HepG2 (cell line): ENCODE measurements at regions of chrX and their contacts with region 1.

Region 1: GRCh38 chrX:153763989-153764755 is at the start of gene PLXNB3:
- DNase-seq: peak; percentile 57
- ATAC-seq: peak; percentile 77
- H3K4me3 ChIP-seq: peak within 1 kb of the TSS; percentile 45 to 66 (median 53); a peak in 5 of 6 replicates
- H3K27ac ChIP-seq: no peak within 1 kb of the TSS
- H3K4me1 ChIP-seq: peaks cover 37% of the 10 kb centered on the region
- H3K27me3 ChIP-seq: no peaks in the 10 kb centered on the region
- CTCF ChIP-seq: peak; percentile 96
- EP300 ChIP-seq: no peak
- POLR2A ChIP-seq: no peak
- RAD21 ChIP-seq: peak; percentile 73; the same call in 1 of the 2 replicates
- total RNA-seq, gene PLXNB3: 1.2 and 3.0 TPM in 2 replicates

Region 2: DNA sequence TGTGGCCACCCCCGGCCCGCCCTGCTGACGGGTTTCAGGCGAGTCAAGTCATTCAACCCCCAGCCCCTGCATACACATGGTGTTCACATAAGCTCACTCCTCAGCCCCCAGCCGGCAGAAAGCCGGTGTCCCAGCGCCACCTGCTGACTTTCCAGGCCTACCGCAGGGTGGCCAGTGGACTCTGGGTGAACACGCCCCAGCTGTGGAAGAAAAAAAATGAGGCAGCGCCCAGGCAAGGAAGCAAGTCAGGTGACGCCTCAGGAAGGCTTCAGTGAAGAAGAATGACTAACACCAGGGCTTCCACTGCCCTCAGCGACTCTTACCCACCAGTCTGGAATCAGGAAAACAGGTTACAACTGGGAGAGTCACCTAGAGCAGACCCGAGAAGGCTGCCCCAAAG is 55.8 kb before region 1 on chrX:
- CTCF ChIA-PET with region 1: no interaction called
- POLR2A ChIA-PET with region 1: no interaction called
- in situ Hi-C with region 1: no loop called
- intact Hi-C with region 1: no loop called
- DNase-seq: peak; percentile 65
- ATAC-seq: peak; percentile 86
- H3K4me3 ChIP-seq: no peak overlapping the region
- H3K27ac ChIP-seq: no peak overlapping the region
- H3K4me1 ChIP-seq: no peaks in the 10 kb centered on the region
- H3K27me3 ChIP-seq: no peaks in the 10 kb centered on the region
- CTCF ChIP-seq: peak; percentile 84
- EP300 ChIP-seq: no peak
- POLR2A ChIP-seq: no peak
- RAD21 ChIP-seq: peak; percentile 31; the same call in 1 of the 2 replicates

Region 3: GRCh38 chrX:153726286-153727122 is 37.7 kb before region 1 on chrX:
- CTCF ChIA-PET with region 1: no interaction called
- POLR2A ChIA-PET with region 1: interaction called, 15 read pairs
- in situ Hi-C with region 1: no loop called
- intact Hi-C with region 1: no loop called
- DNase-seq: peak; percentile 75
- ATAC-seq: peak; percentile 62
- H3K4me3 ChIP-seq: peak overlapping the region; percentile 60 to 79 (median 79); a peak in 5 of 6 replicates
- H3K27ac ChIP-seq: peak overlapping the region; percentile 92
- H3K4me1 ChIP-seq: peaks cover 51% of the 10 kb centered on the region
- H3K27me3 ChIP-seq: no peaks in the 10 kb centered on the region
- CTCF ChIP-seq: peak; percentile 9; the same call in 1 of the 2 replicates
- EP300 ChIP-seq: no peak
- POLR2A ChIP-seq: peak in 1 of 2 experiments; percentile 86; a peak in 2 of 4 replicates
- RAD21 ChIP-seq: 0 out of 2 replicates have a peak, but pooled peaks have one; percentile 44

Region 4: DNA sequence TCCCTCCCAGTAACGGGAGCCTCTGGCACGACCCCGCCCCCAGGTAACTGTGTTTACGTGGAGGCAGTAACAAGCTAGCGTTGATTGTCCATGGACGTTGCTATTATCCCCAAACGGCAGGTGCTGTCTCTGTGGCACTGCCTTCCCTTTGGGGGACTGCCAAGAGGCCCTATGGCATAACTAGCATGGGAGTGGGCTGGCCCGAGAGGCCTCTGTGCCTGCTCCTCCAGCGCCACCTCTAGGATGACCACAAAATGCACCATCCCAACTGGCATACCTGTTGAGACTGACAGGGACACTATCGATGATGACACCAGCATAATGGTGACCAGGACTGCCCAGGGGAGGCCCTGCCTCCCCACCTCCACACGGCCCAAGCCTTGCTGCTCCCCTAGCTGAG is 18.1 kb after region 1 on chrX:
- CTCF ChIA-PET with region 1: no interaction called
- POLR2A ChIA-PET with region 1: interaction called, 4 read pairs
- in situ Hi-C with region 1: no loop called
- intact Hi-C with region 1: loop called (anchors 2 kb)
- DNase-seq: no peak
- ATAC-seq: peak; percentile 19; the same call in 1 of the 3 replicates
- H3K4me3 ChIP-seq: no peak overlapping the region
- H3K27ac ChIP-seq: no peak overlapping the region
- H3K4me1 ChIP-seq: no peaks in the 10 kb centered on the region
- H3K27me3 ChIP-seq: no peaks in the 10 kb centered on the region
- CTCF ChIP-seq: peak; percentile 49
- EP300 ChIP-seq: no peak
- POLR2A ChIP-seq: no peak
- RAD21 ChIP-seq: no peak

Region 5: DNA sequence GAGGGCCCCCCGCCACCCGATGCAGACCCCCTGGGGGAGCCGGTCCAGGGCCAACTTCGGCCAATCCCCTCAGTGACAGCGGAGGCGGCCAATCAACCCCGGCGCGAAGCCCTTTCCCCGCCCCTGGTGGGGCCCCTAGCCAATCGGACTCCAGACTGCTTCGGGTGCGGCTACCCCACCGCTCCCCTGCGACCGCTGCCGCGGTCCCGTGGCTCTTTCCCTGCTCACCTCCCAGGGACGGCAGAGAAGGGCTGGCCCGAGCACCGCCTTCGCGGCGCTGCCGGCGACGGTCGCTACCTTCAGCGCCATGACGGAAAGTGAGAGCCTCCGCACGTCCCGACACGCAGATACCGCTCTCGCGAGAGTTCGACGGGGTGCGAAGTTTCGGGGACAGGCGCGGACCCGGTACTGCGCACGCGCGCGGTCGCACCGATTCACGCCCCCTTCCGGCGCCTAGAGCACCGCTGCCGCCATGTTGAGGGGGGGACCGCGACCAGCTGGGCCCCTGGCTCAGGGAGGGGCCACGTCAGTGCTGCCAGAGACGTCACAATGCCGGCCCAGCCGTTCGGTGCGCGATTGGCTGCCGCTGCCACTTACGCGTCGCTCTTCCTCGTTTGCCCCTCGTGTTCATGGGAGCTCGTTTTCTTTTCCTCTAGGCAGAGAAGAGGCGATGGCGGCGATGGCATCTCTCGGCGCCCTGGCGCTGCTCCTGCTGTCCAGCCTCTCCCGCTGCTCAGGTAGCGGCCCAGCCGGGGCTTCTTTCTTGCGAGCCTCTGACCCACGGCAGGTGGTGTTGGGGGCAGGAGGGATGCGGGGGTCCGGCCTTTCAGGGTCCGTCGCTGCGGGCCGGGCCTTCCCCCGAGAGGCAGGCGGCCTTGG is 30.1 kb after region 1 on chrX and contains the starts of genes IDH3G and SSR4:
- CTCF ChIA-PET with region 1: interaction called, 3 read pairs
- POLR2A ChIA-PET with region 1: interaction called, 12 read pairs
- in situ Hi-C with region 1: no loop called
- intact Hi-C with region 1: no loop called
- DNase-seq: peak; percentile 83
- ATAC-seq: peak; percentile 88
- H3K4me3 ChIP-seq: peak within 1 kb of the TSS; percentile 68 to 77 (median 75)
- H3K27ac ChIP-seq: peak within 1 kb of the TSS; percentile 88
- H3K4me1 ChIP-seq: peaks cover 27% of the 10 kb centered on the region
- H3K27me3 ChIP-seq: no peaks in the 10 kb centered on the region; a peak in 1 of 5 replicates
- CTCF ChIP-seq: peak; percentile 68
- EP300 ChIP-seq: no peak
- POLR2A ChIP-seq: peak in 1 of 2 experiments; percentile 60; a peak in 2 of 4 replicates
- RAD21 ChIP-seq: no peak
- total RNA-seq, gene IDH3G: 16.2 and 18.7 TPM in 2 replicates
- total RNA-seq, gene SSR4: 124 and 214 TPM in 2 replicates

Region 6: DNA sequence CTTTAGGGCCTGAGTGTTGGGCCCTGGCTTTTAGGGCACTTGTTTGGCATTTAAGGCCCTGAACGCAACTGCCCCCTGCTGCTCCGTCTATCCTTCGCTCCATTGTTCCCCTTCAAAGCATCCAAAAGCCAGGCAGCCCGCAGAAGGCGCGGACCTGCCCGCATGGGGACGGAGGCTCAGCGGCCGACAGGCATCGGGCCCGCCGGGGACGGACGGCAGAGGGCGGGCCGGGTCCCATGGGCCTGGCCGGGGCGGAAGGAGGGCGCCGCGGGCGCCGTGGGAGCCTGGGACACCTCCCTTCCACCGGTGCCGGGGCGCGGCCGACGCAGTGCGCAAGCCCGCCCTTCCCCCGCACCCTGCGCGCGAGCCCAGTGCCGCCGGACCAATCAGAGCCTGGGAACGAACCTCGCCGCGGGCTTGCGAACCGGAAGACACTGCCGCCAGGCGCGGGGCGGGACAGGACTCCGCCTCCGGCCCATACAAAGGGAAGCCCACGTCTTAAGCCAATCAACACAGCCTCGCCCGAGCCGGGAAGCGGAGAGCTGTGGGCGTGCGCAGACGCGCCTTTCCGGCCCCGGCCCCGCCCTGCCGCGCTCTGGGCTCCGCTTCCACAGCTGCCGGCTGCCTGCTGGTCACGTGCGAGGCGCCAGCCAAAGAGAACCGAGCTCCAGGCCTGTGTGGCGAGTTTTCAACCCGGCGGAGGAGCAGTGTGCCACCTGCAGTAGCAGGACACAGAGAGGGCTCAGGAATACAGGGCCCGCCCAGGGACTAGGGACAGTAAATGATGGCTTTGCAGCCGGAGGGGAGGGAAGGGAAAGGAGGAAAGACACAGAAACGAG is 164.0 kb after region 1 on chrX:
- CTCF ChIA-PET with region 1: no interaction called
- POLR2A ChIA-PET with region 1: interaction called, 11 read pairs
- in situ Hi-C with region 1: no loop called
- intact Hi-C with region 1: no loop called
- DNase-seq: peak; percentile 90
- ATAC-seq: peak; percentile 89
- H3K4me3 ChIP-seq: peak overlapping the region; percentile 71 to 79 (median 76)
- H3K27ac ChIP-seq: peak overlapping the region; percentile 89
- H3K4me1 ChIP-seq: peaks cover 52% of the 10 kb centered on the region
- H3K27me3 ChIP-seq: no peaks in the 10 kb centered on the region
- CTCF ChIP-seq: peak; percentile 31; the same call in 1 of the 2 replicates
- EP300 ChIP-seq: no peak
- POLR2A ChIP-seq: peak in 1 of 2 experiments; percentile 30; a peak in 2 of 4 replicates
- RAD21 ChIP-seq: no peak

Region 7: DNA sequence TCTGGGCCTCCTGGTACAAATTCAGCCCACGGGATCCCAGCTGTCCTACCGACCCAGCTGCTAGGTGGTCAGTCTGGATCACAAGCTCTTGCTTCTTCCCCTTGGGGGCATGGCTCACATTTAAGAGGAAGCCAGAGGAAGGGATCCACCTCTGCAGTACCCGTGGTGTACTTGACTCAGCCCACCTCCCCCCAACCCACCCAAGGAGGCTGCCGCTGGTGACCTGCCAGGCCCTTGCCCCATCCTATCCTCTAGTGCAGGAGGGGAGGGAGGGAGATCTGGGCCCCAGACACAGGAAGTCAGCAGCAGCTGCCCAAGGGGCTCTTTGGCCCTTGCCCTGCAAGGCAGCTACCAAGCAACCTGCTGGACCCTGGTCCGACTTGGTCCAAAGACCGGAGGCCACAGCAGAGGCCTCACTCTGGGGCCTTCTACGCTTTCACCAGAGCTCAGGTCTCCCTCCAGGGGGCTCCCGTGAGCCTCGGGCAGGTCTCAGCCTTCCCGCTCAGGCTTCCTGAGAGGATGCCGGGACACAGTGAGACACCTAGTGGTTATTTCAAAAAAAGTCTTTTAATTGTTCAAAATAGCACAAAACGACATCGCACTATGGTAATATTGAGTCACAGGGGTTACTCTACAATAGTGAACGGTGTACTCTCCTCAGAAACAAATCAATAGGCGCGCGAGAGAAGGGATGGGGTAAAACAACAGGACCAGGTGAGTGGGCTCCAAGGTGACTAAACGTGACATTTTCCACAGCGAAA is 183.0 kb after region 1 on chrX:
- CTCF ChIA-PET with region 1: interaction called, 3 read pairs
- POLR2A ChIA-PET with region 1: interaction called, 6 read pairs
- in situ Hi-C with region 1: no loop called
- intact Hi-C with region 1: loop called (anchors 10 kb)
- DNase-seq: peak; percentile 75
- ATAC-seq: peak; percentile 78
- H3K4me3 ChIP-seq: no peak overlapping the region
- H3K27ac ChIP-seq: peak overlapping the region; percentile 72
- H3K4me1 ChIP-seq: peaks cover 53% of the 10 kb centered on the region
- H3K27me3 ChIP-seq: no peaks in the 10 kb centered on the region
- CTCF ChIP-seq: peak; percentile 87
- EP300 ChIP-seq: peak in 1 of 2 experiments; percentile 38; a peak in 1 of 4 replicates
- POLR2A ChIP-seq: no peak
- RAD21 ChIP-seq: peak; percentile 67; the same call in 1 of the 2 replicates